Activated naive CD4-positive, alpha-beta T cell treated with anti-CD3 and anti-CD28 coated beads for 36 hours (primary cell): ENCODE measurements at regions of chr2 and their contacts with region 1.

Region 1: GRCh38 chr2:64488050-64488974 is 34.4 kb downstream of the LGALSL start:
- DNase-seq: peak; percentile 88
- H3K4me3 Mint-ChIP-seq: no peak overlapping the region
- H3K27ac Mint-ChIP-seq: no peak overlapping the region
- H3K4me1 Mint-ChIP-seq: peaks cover 7% of the 10 kb centered on the region
- H3K27me3 Mint-ChIP-seq: no peaks in the 10 kb centered on the region

Region 2: GRCh38 chr2:63692002-63692606 is 796.2 kb before region 1 on chr2:
- CTCF ChIA-PET with region 1: interaction called, 3 read pairs
- intact Hi-C with region 1: loop called (anchors 5 kb)
- DNase-seq: peak; percentile 40
- H3K4me3 Mint-ChIP-seq: no peak overlapping the region
- H3K27ac Mint-ChIP-seq: no peak overlapping the region
- H3K4me1 Mint-ChIP-seq: no peaks in the 10 kb centered on the region
- H3K27me3 Mint-ChIP-seq: no peaks in the 10 kb centered on the region

Region 3: DNA sequence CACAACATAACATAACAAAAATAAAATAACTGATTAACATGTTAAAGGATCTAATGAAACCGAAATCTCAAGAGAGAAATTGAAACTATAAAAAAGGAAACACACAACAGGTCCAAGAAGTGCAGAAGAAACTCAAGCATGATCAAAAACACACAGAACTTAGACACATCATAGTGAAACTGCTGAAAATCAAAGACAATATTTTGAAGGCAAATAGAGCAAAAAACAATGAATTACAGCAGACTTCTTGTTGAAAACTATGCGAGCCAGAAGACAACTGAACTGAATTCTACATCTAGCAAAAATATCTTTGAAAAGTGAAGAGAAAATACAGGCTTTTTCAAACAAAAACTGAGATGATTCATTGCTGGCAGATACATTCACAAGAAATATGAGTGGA is 585.3 kb before region 1 on chr2:
- CTCF ChIA-PET with region 1: no interaction called
- intact Hi-C with region 1: loop called (anchors 10 kb)
- DNase-seq: no peak
- H3K4me3 Mint-ChIP-seq: no peak overlapping the region
- H3K27ac Mint-ChIP-seq: no peak overlapping the region
- H3K4me1 Mint-ChIP-seq: peaks cover 18% of the 10 kb centered on the region
- H3K27me3 Mint-ChIP-seq: no peaks in the 10 kb centered on the region

Region 4: GRCh38 chr2:64052468-64053241 is 435.7 kb before region 1 on chr2:
- CTCF ChIA-PET with region 1: interaction called, 28 read pairs
- intact Hi-C with region 1: loop called (anchors 1 kb)
- DNase-seq: peak; percentile 38
- H3K4me3 Mint-ChIP-seq: no peak overlapping the region
- H3K27ac Mint-ChIP-seq: peak overlapping the region; percentile 8
- H3K4me1 Mint-ChIP-seq: peaks cover 39% of the 10 kb centered on the region
- H3K27me3 Mint-ChIP-seq: no peaks in the 10 kb centered on the region

Region 5: GRCh38 chr2:64157792-64158191 is 330.5 kb before region 1 on chr2:
- CTCF ChIA-PET with region 1: no interaction called
- intact Hi-C with region 1: loop called (anchors 10 kb)
- DNase-seq: no peak
- H3K4me3 Mint-ChIP-seq: no peak overlapping the region
- H3K27ac Mint-ChIP-seq: no peak overlapping the region
- H3K4me1 Mint-ChIP-seq: no peaks in the 10 kb centered on the region
- H3K27me3 Mint-ChIP-seq: no peaks in the 10 kb centered on the region

Region 6: DNA sequence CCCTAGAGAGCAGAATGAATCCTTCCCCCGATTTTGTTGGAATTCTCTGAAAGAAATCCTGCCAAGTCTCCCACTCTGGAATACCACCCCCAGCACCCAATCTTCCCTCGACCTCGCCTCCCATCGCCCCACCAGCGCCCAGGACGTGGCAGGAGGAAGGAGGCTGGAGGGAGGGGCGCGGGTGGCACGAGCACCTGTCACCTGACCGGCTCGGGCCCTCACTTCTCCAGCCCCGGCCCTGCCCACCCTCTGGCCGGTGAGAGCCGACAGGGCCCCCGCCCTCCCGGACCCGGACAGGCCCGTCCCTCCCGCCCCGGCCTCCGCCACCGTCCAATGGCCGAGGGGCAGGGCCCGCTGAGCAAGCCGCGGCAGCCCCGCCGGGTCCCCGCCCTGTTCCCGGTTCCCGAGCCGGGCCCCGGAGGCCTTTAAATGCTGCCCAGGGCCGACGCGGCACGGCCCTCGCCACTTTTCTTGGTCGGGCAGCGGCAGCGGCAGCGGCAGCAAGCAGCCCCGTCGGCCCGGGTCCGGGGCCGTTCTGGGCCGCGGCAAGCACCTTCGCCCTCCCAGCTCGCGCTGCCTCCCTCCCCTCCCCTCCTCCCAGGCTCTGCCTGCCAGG is 34.4 kb before region 1 on chr2 and contains the start of gene LGALSL:
- CTCF ChIA-PET with region 1: interaction called, 18 read pairs
- intact Hi-C with region 1: loop called (anchors 2 kb)
- DNase-seq: peak; percentile 14
- H3K4me3 Mint-ChIP-seq: peak within 1 kb of the TSS; percentile 84
- H3K27ac Mint-ChIP-seq: no peak within 1 kb of the TSS
- H3K4me1 Mint-ChIP-seq: peaks cover 6% of the 10 kb centered on the region
- H3K27me3 Mint-ChIP-seq: peaks cover 5% of the 10 kb centered on the region
- total RNA-seq, gene LGALSL: 1.0 to 1.5 TPM

Region 7: GRCh38 chr2:64504774-64505720 is 16.7 kb after region 1 on chr2:
- CTCF ChIA-PET with region 1: interaction called, 15 read pairs
- intact Hi-C with region 1: no loop called
- DNase-seq: no peak
- H3K4me3 Mint-ChIP-seq: no peak overlapping the region
- H3K27ac Mint-ChIP-seq: no peak overlapping the region
- H3K4me1 Mint-ChIP-seq: no peaks in the 10 kb centered on the region
- H3K27me3 Mint-ChIP-seq: no peaks in the 10 kb centered on the region

Region 8: DNA sequence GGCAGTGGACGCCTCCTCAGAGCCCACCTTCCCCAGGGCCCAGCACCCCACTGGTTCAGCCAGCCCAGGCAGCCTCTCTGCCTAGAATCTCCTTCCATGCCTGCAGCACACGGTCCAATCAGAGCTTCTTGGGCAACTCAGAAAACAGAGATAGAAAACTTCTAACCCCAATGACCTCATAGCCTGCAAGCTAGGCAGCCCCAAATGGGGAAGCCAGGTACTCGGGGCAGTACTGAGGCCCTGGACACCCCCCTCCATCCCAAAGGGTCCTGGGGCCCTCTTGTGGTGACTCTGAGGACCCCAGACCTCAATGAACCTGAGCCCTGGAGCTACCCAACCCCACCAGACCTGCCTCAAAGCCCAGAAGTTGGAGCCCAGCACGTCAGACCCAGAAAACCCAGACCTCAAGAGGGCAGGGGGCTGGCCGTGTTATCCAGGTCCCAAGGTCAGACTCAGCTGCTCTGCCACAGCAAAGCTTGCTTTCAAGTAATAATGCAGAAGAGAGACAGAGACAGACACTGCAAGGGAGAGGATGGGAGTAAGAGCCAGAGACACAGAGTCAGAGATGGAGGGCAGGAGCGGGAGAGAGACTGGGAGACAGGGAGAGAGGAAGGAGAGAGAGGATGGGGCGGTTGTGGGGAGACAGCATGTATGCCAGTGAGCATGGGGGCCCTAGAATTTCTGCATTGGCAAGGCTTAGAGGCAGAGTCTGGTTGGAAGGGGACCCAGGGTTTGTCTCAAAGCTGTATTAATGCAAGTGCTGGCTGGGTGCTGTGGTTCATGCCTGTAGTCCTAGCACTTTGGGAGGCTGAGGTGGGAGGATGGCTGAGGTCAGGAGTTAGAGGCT is 137.2 kb after region 1 on chr2:
- CTCF ChIA-PET with region 1: no interaction called
- intact Hi-C with region 1: no loop called
- DNase-seq: no peak
- H3K4me3 Mint-ChIP-seq: no peak overlapping the region
- H3K27ac Mint-ChIP-seq: no peak overlapping the region
- H3K4me1 Mint-ChIP-seq: no peaks in the 10 kb centered on the region
- H3K27me3 Mint-ChIP-seq: no peaks in the 10 kb centered on the region